ENCODE measurements at regions of chr1 and their contacts with region 1.

Region 1: DNA sequence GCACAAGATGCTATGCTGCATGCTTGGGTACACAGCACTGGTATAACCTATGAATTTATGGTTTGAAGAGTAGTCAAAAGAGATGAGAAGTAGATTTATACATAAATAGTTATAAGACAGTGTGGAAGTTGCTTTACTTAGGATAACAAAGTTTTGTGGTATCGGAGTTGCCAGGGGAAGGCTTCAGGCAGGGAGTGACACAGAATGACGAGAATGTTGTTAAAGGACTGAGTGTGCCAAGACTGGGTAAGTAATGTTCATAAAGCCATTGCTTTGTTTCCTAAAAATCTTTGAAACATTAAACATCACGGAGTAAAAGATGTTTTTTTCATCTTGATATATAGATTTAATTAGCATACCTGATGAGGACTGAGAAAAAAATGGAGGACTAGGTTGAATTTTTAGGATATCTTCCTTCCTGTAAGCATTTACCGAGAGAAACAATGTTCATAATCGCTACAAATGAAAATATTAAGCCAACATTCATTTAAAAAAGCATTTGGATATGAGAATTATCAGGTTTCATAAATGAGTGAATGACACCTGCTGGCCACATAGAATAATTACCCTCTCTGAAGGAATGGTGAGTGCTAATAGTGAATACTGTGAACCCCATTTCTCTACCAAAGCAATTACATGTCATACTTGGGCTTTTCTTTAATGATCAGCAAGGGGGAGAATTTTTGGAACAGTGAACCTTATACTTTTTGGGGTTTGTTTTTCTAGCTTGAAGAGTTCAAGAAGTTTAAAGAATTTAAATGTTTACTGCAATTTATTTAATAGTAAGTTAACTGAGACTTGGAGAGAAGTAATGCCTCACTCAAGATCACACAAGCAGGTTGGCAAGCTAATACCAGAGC is 28.4 kb downstream of the EXTL2 start:
- DNase-seq: no peak
- H3K4me3 ChIP-seq: no peak overlapping the region
- H3K27ac ChIP-seq: no peak overlapping the region
- H3K4me1 ChIP-seq: no peaks in the 10 kb centered on the region
- H3K27me3 ChIP-seq: no peaks in the 10 kb centered on the region
- CTCF ChIP-seq: peak; percentile 40

Region 2: DNA sequence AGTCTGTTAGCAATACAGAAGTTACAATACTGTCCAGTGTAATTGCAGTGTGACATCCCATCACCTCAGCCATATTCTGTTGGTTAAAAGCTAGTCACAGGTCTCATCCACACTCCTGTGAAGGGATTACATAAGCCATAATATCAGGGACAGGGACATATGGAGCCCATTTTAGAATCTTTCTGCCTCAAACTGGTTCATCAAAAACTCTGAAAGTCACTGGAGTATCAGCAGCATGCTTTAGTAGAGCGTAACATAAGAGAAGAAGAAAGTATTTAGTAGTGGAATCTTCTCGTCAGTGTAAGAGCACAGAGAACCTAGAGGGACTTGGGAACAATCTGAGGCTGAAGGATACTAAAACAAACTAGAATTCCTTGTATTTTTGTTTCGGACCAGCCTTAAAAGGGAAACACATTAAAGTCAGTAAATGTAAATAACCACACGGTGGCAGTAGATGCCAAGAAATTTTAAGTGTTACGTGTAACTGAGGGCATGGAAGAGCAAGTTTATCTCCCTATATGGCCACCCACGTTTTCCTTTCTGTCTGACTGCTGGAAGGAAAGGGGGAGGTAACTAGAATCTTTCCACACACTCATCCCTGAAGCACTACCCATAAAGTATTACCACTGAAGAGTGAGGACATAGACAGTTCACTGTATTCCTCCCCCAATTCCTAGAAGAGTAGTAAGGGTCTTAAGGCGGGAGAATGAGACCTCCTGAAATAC is 1057.7 kb before region 1 on chr1:
- intact Hi-C with region 1: loop called (anchors 5 kb)
- DNase-seq: peak; percentile 56
- H3K4me3 ChIP-seq: no peak overlapping the region
- H3K27ac ChIP-seq: no peak overlapping the region
- H3K4me1 ChIP-seq: no peaks in the 10 kb centered on the region
- H3K27me3 ChIP-seq: no peaks in the 10 kb centered on the region
- CTCF ChIP-seq: peak; percentile 45

Region 3: DNA sequence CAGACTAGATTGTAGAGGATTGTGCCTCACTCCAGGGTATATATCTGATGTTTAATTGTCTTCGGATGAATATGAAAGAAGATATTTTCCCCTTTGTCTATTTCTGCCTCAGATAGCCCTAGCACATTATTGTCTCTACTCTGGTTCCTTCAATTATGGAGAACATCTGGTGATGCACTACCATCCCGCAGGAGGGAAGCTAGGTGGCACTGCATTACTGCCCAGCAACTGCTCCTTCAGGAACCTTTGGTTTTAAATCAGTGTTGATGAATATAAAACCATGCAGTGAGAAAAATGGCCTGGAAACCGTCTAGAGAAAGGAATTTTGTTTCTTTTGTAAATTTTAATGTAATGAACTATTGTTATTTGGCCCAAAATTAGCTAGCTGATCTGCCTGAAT is 259.8 kb before region 1 on chr1:
- intact Hi-C with region 1: loop called (anchors 2 kb)
- DNase-seq: peak; percentile 28
- H3K4me3 ChIP-seq: no peak overlapping the region
- H3K27ac ChIP-seq: no peak overlapping the region
- H3K4me1 ChIP-seq: no peaks in the 10 kb centered on the region
- H3K27me3 ChIP-seq: no peaks in the 10 kb centered on the region
- CTCF ChIP-seq: peak; percentile 39

Region 4: GRCh38 chr1:100989306-100990077 is 123.2 kb after region 1 on chr1:
- intact Hi-C with region 1: no loop called
- DNase-seq: no peak
- H3K4me3 ChIP-seq: no peak overlapping the region
- H3K27ac ChIP-seq: no peak overlapping the region
- H3K4me1 ChIP-seq: no peaks in the 10 kb centered on the region
- H3K27me3 ChIP-seq: no peaks in the 10 kb centered on the region
- CTCF ChIP-seq: no peak